Activated T-helper 2 cell treated with anti-CD3 and anti-CD28 coated beads, Interferon-gamma antibody, Interleukin-2, Interleukin-4, amounts not matched to agents 10 μg/mL and 5 μg/mL and 100 μg/mL, durations not matched to agents 14 hours and 24 hours and 36 hours (primary cell): ENCODE measurements at regions of chr3 and their contacts with region 1.

Region 1: GRCh38 chr3:172511783-172512762 is 11.2 kb downstream of the TNFSF10 start:
- DNase-seq: peak; percentile 63
- H3K4me3 Mint-ChIP-seq: peak overlapping the region; percentile 43
- H3K27ac Mint-ChIP-seq: peak overlapping the region; percentile 90
- H3K4me1 Mint-ChIP-seq: peaks cover 75% of the 10 kb centered on the region
- H3K27me3 Mint-ChIP-seq: no peaks in the 10 kb centered on the region

Region 2: GRCh38 chr3:171284308-171285075 is 1227.6 kb before region 1 on chr3:
- intact Hi-C with region 1: loop called (anchors 10 kb)
- DNase-seq: no peak
- H3K4me3 Mint-ChIP-seq: peak overlapping the region; percentile 34
- H3K27ac Mint-ChIP-seq: peak overlapping the region; percentile 68
- H3K4me1 Mint-ChIP-seq: peaks cover 74% of the 10 kb centered on the region
- H3K27me3 Mint-ChIP-seq: no peaks in the 10 kb centered on the region

Region 3: DNA sequence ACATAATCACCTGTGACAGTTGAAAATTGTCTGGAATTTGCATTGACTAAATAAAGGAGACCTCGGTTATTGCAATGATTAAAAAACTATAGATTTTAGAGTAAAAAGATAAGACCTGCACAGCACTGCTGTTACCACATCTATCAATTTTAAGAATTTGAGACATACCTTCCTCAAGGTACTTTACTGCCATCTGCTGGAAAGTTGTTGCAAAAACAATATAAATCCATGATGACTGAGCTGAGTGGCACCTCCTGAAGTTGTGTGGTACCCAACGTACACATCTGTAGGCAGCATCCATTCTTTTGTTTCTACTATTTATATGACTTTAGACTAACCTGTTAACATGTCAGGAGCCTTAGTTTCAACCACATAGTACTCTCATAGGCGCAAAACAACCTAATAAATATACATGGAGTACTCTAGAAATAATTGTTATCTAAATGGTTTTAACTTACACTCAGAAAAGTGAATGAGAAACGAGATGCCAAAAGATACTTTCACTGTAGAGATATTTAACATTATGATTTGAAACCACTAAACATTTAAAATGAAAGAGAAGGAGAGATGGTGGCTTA is 170.5 kb before region 1 on chr3:
- intact Hi-C with region 1: no loop called
- DNase-seq: no peak
- H3K4me3 Mint-ChIP-seq: no peak overlapping the region
- H3K27ac Mint-ChIP-seq: no peak overlapping the region
- H3K4me1 Mint-ChIP-seq: peaks cover 4% of the 10 kb centered on the region
- H3K27me3 Mint-ChIP-seq: no peaks in the 10 kb centered on the region

Region 4: GRCh38 chr3:172530566-172530965 is 18.5 kb after region 1 on chr3:
- intact Hi-C with region 1: loop called (anchors 1 kb)
- DNase-seq: peak; percentile 50
- H3K4me3 Mint-ChIP-seq: peak overlapping the region; percentile 22
- H3K27ac Mint-ChIP-seq: peak overlapping the region; percentile 78
- H3K4me1 Mint-ChIP-seq: peaks cover 46% of the 10 kb centered on the region
- H3K27me3 Mint-ChIP-seq: no peaks in the 10 kb centered on the region

Region 5: GRCh38 chr3:172562871-172563863 is 51.1 kb after region 1 on chr3:
- intact Hi-C with region 1: loop called (anchors 1 kb)
- DNase-seq: peak; percentile 32
- H3K4me3 Mint-ChIP-seq: peak overlapping the region; percentile 40
- H3K27ac Mint-ChIP-seq: peak overlapping the region; percentile 89
- H3K4me1 Mint-ChIP-seq: peaks cover 47% of the 10 kb centered on the region
- H3K27me3 Mint-ChIP-seq: no peaks in the 10 kb centered on the region

Region 6: DNA sequence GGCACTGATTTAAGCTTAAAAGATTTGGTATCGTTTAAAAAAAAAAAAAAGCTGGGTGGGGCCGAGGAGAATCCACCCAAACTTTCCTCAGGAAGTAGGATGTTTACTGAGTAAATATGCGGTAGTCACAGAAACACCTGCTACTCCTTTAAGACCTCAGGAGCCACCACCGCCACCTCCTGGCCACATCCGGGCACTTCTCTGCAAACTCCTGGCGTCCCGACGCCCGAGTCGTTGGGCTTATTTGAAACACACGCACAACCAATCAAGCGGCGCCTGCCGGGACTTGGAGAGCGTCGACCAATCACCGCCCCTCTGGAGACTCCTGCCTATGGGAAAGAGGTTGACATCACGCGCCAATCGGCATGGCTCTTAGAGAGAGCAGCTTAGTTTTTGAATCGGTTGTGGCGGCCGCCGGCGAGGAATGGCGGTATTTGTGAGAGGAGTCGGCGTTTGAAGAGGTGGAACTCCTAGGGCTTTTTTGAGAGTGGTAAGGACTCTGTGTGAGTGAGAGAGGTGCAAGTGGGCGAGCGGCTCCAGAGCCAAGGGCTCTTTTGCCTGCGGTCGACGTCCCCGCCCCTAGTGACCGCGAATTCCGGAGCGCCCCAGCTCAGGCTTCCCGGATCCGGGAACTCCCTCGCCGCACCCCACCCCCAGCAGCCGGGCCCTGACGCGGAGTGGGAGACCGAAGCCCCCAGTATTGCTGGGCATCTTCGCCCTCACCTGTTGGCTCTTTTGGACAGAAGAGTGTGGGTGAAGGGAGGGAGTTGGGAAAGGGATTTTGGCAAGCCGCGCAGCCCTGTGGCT is 238.5 kb after region 1 on chr3 and contains the start of gene ECT2:
- intact Hi-C with region 1: loop called (anchors 10 kb)
- DNase-seq: peak; percentile 98
- H3K4me3 Mint-ChIP-seq: peak within 1 kb of the TSS; percentile 97
- H3K27ac Mint-ChIP-seq: peak within 1 kb of the TSS; percentile 95
- H3K4me1 Mint-ChIP-seq: peaks cover 31% of the 10 kb centered on the region
- H3K27me3 Mint-ChIP-seq: peaks cover 10% of the 10 kb centered on the region
- total RNA-seq, gene ECT2: 39.5 and 40.3 TPM in 2 replicates